IMR-90 (cell line): ENCODE measurements at regions of chr12 and their contacts with region 1.

Region 1: GRCh38 chr12:20369305-20370005 is 1.1 kb downstream of the PDE3A start:
- DNase-seq: peak; percentile 39
- ATAC-seq: peak; percentile 73
- H3K4me3 ChIP-seq: peak overlapping the region; percentile 89
- H3K27ac ChIP-seq: peak overlapping the region; percentile 35
- H3K4me1 ChIP-seq: no peaks in the 10 kb centered on the region
- H3K27me3 ChIP-seq: no peaks in the 10 kb centered on the region
- CTCF ChIP-seq: no peak
- POLR2A ChIP-seq: no peak
- RAD21 ChIP-seq: no peak

Region 2: DNA sequence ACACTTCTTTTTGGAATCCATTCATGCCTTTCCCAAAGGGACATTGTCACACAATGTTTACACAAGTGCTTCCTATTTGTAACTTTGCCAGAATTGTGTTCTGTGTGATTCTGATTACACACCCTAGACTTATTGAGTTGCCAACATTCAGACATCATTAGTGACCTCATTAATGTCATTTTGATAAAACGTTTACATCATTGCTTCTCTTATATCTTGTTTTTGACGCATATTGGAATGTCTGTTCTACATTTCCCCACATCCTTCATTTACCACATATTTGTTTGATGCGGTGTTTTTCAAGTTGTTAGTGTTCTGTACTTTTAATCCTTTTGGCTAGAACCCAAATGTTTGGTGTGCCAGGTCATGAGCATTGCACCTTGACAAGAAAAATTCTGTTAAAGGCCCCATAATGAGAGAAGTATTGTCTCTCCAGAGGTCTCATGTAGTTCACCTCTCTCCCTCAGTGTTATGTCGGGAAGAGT is 624.7 kb before region 1 on chr12:
- CTCF ChIA-PET with region 1: no interaction called
- POLR2A ChIA-PET with region 1: no interaction called
- dilution Hi-C with region 1: no loop called
- in situ Hi-C with region 1: loop called (anchors 10 kb)
- intact Hi-C with region 1: loop called (anchors 2 kb)
- DNase-seq: peak; percentile 84
- ATAC-seq: no peak; the same call in 1 of the 2 replicates
- H3K4me3 ChIP-seq: no peak overlapping the region
- H3K27ac ChIP-seq: no peak overlapping the region
- H3K4me1 ChIP-seq: no peaks in the 10 kb centered on the region; the same call in 1 of the 2 replicates
- H3K27me3 ChIP-seq: no peaks in the 10 kb centered on the region
- CTCF ChIP-seq: no peak
- POLR2A ChIP-seq: no peak
- RAD21 ChIP-seq: no peak

Region 3: DNA sequence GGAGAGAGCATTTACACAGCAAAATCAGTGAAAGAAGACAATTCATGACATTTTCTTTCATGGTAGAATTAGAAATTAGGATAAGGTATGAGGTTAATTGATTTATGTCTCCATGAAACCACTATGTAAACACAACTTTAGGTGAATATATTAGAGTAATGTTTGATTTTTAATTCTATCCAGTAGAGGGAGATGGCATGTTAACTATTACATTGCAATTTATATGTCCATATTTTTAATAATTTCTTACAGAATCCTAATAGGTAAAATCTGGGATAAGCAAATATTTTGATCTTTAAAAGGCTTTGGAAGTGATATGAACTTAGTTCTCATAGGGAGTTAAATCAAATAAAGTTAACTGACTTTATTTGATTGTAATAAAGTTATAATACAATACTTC is 374.5 kb before region 1 on chr12:
- CTCF ChIA-PET with region 1: no interaction called
- POLR2A ChIA-PET with region 1: no interaction called
- dilution Hi-C with region 1: no loop called
- in situ Hi-C with region 1: no loop called
- intact Hi-C with region 1: loop called (anchors 5 kb)
- DNase-seq: no peak
- ATAC-seq: no peak
- H3K4me3 ChIP-seq: no peak overlapping the region
- H3K27ac ChIP-seq: no peak overlapping the region
- H3K4me1 ChIP-seq: peaks cover 5% of the 10 kb centered on the region
- H3K27me3 ChIP-seq: no peaks in the 10 kb centered on the region
- CTCF ChIP-seq: 0 out of 2 replicates have a peak, but pooled peaks have one; percentile 25
- POLR2A ChIP-seq: no peak
- RAD21 ChIP-seq: no peak

Region 4: GRCh38 chr12:20105943-20106342 is 263.5 kb before region 1 on chr12:
- CTCF ChIA-PET with region 1: no interaction called
- POLR2A ChIA-PET with region 1: no interaction called
- dilution Hi-C with region 1: no loop called
- in situ Hi-C with region 1: no loop called
- intact Hi-C with region 1: no loop called
- DNase-seq: peak; percentile 65
- ATAC-seq: peak; percentile 83
- H3K4me3 ChIP-seq: no peak overlapping the region
- H3K27ac ChIP-seq: no peak overlapping the region
- H3K4me1 ChIP-seq: peaks cover 6% of the 10 kb centered on the region
- H3K27me3 ChIP-seq: no peaks in the 10 kb centered on the region
- CTCF ChIP-seq: no peak
- POLR2A ChIP-seq: no peak
- RAD21 ChIP-seq: no peak

Region 5: DNA sequence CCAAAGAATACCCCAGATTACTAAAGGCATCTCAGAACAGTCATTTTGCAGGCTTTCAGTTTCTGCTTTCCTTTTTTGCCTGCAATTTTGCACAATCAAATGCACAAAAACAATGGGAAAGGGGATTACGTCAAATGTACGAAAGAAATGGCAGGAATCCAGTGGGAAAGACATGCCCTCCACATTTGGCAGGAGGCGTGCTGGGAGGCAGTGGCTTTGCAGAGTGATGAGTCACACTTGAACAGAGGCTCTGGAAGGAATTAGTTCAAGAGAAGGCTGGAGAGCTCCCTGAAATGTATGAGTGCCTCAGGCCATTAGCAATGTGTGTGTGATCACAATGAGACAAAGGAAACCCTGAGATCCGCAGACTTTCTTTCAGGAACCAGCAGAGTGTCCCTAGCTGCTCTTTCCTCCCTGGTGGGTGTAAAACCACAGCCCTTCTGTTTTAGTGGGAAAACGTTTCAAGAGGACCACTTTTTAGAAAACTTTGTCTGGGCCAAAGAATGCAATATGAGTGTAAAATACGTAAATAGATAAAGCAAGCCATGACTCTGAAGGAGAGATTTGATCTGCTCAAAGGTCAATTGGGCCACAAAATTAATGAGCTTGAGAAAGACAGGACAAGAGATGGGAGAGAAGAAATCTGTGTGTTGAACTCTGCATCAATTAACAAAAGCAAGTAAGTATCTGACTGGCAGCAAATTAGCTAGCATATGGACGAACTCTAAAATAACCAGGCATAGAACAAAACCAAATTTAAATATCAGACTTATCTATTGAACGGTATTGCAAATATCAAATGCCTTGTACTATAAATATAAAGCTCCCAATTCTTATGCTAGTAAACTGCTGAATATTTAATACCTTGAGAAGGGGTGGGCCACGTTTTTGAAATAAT is 156.5 kb before region 1 on chr12:
- CTCF ChIA-PET with region 1: no interaction called
- POLR2A ChIA-PET with region 1: no interaction called
- dilution Hi-C with region 1: no loop called
- in situ Hi-C with region 1: no loop called
- intact Hi-C with region 1: no loop called
- DNase-seq: peak; percentile 98
- ATAC-seq: peak; percentile 99
- H3K4me3 ChIP-seq: no peak overlapping the region
- H3K27ac ChIP-seq: peak overlapping the region; percentile 65; the same call in 1 of the 2 replicates
- H3K4me1 ChIP-seq: peaks cover 1% of the 10 kb centered on the region
- H3K27me3 ChIP-seq: no peaks in the 10 kb centered on the region
- CTCF ChIP-seq: no peak
- POLR2A ChIP-seq: no peak
- RAD21 ChIP-seq: no peak

Region 6: GRCh38 chr12:20601668-20602280 is 232.3 kb after region 1 on chr12:
- CTCF ChIA-PET with region 1: no interaction called
- POLR2A ChIA-PET with region 1: no interaction called
- dilution Hi-C with region 1: no loop called
- in situ Hi-C with region 1: no loop called
- intact Hi-C with region 1: loop called (anchors 1 kb)
- DNase-seq: peak; percentile 73
- ATAC-seq: peak; percentile 52
- H3K4me3 ChIP-seq: no peak overlapping the region
- H3K27ac ChIP-seq: no peak overlapping the region
- H3K4me1 ChIP-seq: no peaks in the 10 kb centered on the region; the same call in 1 of the 2 replicates
- H3K27me3 ChIP-seq: no peaks in the 10 kb centered on the region
- CTCF ChIP-seq: peak; percentile 66
- POLR2A ChIP-seq: no peak
- RAD21 ChIP-seq: peak; percentile 54